ENCODE measurements at regions of chr12 and their contacts with region 1.

Region 1: GRCh38 chr12:48995061-48995879 is 3.9 kb downstream of the DDN start:
- DNase-seq: peak in 2 of 3 donors; percentile 41 to 55
- H3K4me3 ChIP-seq: peak overlapping the region in 2 of 7 experiments; percentile 25 to 40
- H3K27ac ChIP-seq: no peak overlapping the region
- H3K4me1 ChIP-seq: peaks cover 2 to 41% (median 39%) of the 10 kb centered on the region in 4 experiments
- H3K27me3 ChIP-seq: peaks cover 5 to 81% (median 32%) of the 10 kb centered on the region in 5 experiments

Region 2: DNA sequence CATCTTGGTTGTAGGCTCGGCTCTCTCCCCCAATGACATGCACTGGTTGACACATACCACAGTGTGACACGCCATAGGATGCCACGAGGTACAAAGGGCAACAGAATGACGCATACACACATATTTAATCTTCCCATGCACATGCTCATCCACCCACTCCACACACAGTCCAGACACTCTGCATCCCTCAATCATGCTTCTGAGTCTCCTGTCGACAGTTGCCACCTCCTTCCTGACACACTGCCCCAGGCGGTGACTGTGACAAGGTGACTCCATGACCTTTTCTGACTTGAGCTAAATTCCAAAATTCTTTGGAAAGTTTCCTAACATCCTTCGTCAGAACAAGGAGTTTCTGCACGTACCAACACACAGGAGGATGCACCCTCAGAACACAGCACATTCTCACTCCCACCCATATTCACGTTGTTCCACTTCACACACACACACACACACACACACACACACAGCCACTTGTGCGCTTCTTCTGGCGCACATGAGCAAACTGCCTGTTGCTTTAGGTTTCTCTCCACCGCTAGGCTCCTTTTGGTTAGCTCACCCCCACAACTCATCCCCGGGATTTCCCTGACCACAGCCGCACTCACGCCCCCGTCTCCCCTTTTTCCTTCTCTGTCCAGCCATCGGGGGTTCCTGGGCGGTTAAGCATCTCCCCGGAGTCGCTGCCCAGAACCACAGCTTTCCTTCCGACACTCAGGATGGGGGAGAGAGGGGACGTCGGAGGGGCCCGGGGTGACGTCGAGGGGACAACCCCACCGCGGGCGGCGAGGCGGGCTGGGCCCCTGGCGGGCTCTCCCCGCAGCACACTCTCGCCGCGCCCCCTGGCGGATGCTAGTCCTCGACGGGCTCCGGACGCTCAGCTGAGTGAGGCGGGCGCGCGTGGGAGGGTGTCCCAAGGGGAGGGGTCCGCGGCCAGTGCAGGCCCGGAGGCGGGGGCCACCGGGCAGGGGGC is 17.7 kb before region 1 on chr12:
- CTCF ChIA-PET with region 1: interaction called, 578 read pairs
- POLR2A ChIA-PET with region 1: interaction called, 4 read pairs
- DNase-seq: peak; percentile 81 to 95 (median 94)
- H3K4me3 ChIP-seq: peak overlapping the region in 2 of 7 experiments; percentile 58 to 66
- H3K27ac ChIP-seq: no peak overlapping the region
- H3K4me1 ChIP-seq: peaks cover 0 to 57% (median 53%) of the 10 kb centered on the region in 4 experiments
- H3K27me3 ChIP-seq: peaks cover 4 to 97% (median 56%) of the 10 kb centered on the region in 5 experiments

Region 3: GRCh38 chr12:49037111-49037946 is 42.1 kb after region 1 on chr12:
- CTCF ChIA-PET with region 1: interaction called, 15 read pairs
- POLR2A ChIA-PET with region 1: no interaction called
- DNase-seq: no peak
- H3K4me3 ChIP-seq: no peak overlapping the region
- H3K27ac ChIP-seq: no peak overlapping the region
- H3K4me1 ChIP-seq: no peaks in the 10 kb centered on the region
- H3K27me3 ChIP-seq: no peaks in the 10 kb centered on the region

Region 4: DNA sequence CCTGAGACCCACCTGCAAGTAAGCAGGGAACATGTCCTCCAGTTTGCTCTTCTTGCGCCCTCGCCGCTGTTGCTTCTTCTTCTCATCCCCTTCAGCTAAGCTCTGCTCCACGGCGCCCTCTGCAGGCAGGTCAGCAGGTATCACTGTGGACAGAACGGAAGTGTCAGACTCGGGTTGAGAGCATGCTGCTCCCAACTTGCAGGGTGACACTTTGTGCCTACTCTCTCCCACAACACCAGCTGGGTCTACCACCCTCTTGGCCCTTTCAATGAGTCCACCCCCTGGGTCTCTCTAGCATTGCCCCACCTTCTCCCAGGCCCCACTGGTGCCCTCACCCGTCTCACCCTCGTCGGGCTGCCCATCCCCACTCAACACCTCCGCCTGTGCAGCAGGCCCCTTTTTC is 48.6 kb after region 1 on chr12:
- CTCF ChIA-PET with region 1: interaction called, 44 read pairs
- POLR2A ChIA-PET with region 1: interaction called, 6 read pairs
- DNase-seq: peak; percentile 64 to 84 (median 79)
- H3K4me3 ChIP-seq: no peak overlapping the region
- H3K27ac ChIP-seq: no peak overlapping the region
- H3K4me1 ChIP-seq: no peaks in the 10 kb centered on the region
- H3K27me3 ChIP-seq: no peaks in the 10 kb centered on the region

Region 5: DNA sequence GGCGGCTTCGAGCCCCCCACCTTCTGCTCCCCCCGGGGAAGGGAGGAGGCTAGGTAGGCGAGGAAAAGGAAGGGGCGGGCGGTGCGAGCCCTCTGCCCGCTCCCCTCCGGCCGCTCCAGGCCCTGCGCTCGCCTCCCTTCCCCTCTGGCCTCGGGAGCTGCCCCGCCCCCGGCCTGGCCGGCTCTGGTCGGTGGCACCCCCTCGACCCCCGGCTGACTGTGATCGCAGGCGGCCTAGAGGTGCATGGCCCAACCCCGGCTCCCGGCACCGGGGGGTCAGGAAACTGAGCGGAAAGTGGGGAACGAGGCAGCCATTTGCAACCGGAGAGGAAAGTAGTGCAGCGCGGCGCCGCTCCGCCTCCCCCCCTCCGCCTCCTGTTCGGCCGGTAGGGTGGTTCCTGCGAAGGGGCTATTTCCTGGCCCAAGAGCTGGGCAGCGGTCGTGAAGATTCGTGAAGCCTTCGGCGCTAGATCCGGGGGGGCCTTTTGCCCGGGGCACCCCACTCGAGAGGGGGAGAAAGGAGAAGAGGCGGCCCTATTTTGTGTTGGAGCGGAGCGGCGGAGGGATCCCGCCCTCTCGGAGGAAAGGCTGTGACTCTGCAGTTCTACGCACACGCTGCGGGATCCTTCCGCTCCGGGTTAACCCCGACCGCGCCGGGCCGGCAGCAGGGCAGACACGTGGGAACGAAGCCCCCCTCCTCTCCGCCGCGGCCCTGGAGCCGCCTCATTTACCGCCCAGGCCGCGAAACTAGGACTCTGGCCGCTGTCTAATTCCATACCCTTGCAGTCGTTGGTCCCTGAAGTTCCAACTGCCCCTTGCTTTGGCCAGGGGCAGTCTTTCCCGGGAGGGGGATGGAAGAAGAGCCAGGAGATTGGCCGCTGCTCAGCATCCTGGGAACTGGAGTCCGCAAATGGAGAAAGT is 65.2 kb after region 1 on chr12 and contains the start of gene KMT2D:
- CTCF ChIA-PET with region 1: interaction called, 11 read pairs
- POLR2A ChIA-PET with region 1: no interaction called
- DNase-seq: peak; percentile 97 to 99 (median 98)
- H3K4me3 ChIP-seq: peak within 1 kb of the TSS; percentile 89 to 98 (median 95)
- H3K27ac ChIP-seq: peak within 1 kb of the TSS; percentile 95 to 99
- H3K4me1 ChIP-seq: peaks cover 29 to 54% (median 47%) of the 10 kb centered on the region in 4 experiments
- H3K27me3 ChIP-seq: no peaks in the 10 kb centered on the region

Region 6: GRCh38 chr12:49200919-49201594 is 205.8 kb after region 1 on chr12:
- CTCF ChIA-PET with region 1: no interaction called
- POLR2A ChIA-PET with region 1: no interaction called
- DNase-seq: peak; percentile 77 to 94 (median 91)
- H3K4me3 ChIP-seq: peak overlapping the region in 3 of 7 experiments; percentile 11 to 58 (median 48)
- H3K27ac ChIP-seq: peak overlapping the region; percentile 74 to 90
- H3K4me1 ChIP-seq: peaks cover 10 to 36% (median 25%) of the 10 kb centered on the region in 4 experiments
- H3K27me3 ChIP-seq: no peaks in the 10 kb centered on the region

Measured in common myeloid progenitor, CD34-positive (primary cell).